ENCODE measurements at regions of chr7 and their contacts with region 1.

Region 1: DNA sequence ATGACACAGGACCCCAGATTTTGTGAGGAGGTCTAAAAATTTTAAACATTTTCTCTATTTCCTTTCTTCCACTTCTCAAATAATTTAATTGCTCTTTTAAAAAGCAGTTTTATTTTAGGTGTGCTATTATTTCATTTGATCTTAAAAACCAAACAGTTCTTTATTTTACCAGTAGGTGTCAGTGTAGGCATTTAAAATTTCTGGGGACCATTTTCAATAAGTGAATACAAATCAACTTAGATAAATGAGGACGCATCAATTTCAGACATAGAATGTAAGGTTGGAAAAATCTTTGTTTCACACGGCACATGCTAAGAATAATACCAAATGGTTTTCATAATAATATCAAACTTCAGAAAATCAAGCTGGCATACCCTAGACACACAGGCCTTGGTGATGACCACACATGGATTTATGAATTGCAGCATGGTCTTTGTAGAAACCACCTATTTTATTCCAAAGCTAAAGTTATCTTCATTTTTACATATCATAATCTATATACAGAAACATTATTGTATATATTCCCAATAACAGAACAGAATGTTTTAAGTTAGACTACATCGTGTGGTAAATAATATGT is 127.6 kb upstream of the SLC26A5 start:
- DNase-seq: peak; percentile 29 to 48 (median 34)
- ATAC-seq: peak; percentile 46; the same call in 1 of the 3 replicates
- H3K4me3 ChIP-seq: no peak overlapping the region
- H3K27ac ChIP-seq: no peak overlapping the region
- H3K4me1 ChIP-seq: no peaks in the 10 kb centered on the region
- H3K27me3 ChIP-seq: no peaks in the 10 kb centered on the region
- CTCF ChIP-seq: peak in 2 of 3 experiments; percentile 50 to 82; a peak in 3 of 6 replicates
- EP300 ChIP-seq: no peak
- POLR2A ChIP-seq: no peak
- RAD21 ChIP-seq: peak; percentile 90 to 95

Region 2: GRCh38 chr7:103447073-103447951 is 126.3 kb before region 1 on chr7:
- CTCF ChIA-PET with region 1: no interaction called
- POLR2A ChIA-PET with region 1: no interaction called
- in situ Hi-C with region 1: no loop called
- intact Hi-C with region 1: loop called (anchors 2 kb)
- DNase-seq: peak; percentile 78 to 84 (median 80)
- ATAC-seq: peak; percentile 97
- H3K4me3 ChIP-seq: no peak overlapping the region
- H3K27ac ChIP-seq: no peak overlapping the region
- H3K4me1 ChIP-seq: peaks cover 9 to 14% of the 10 kb centered on the region in 2 experiments; a peak in 4 of 5 replicates
- H3K27me3 ChIP-seq: peaks cover 29 to 34% of the 10 kb centered on the region in 2 experiments
- CTCF ChIP-seq: peak; percentile 85 to 94 (median 92)
- EP300 ChIP-seq: no peak
- POLR2A ChIP-seq: no peak
- RAD21 ChIP-seq: peak; percentile 72 to 91

Region 3: GRCh38 chr7:103680161-103681144 is 106.9 kb after region 1 on chr7:
- CTCF ChIA-PET with region 1: no interaction called
- POLR2A ChIA-PET with region 1: no interaction called
- in situ Hi-C with region 1: no loop called
- intact Hi-C with region 1: no loop called
- DNase-seq: peak in 3 of 4 experiments; percentile 20 to 82 (median 61)
- ATAC-seq: peak; percentile 99
- H3K4me3 ChIP-seq: no peak overlapping the region
- H3K27ac ChIP-seq: peak overlapping the region; percentile 51; the same call in 2 of the 3 replicates
- H3K4me1 ChIP-seq: peaks cover 4 to 13% of the 10 kb centered on the region in 2 experiments; a peak in 4 of 5 replicates
- H3K27me3 ChIP-seq: no peaks in the 10 kb centered on the region
- CTCF ChIP-seq: no peak
- EP300 ChIP-seq: no peak
- POLR2A ChIP-seq: no peak
- RAD21 ChIP-seq: no peak

Region 4: GRCh38 chr7:103752997-103753396 is 179.4 kb after region 1 on chr7:
- CTCF ChIA-PET with region 1: interaction called, 29 read pairs
- POLR2A ChIA-PET with region 1: no interaction called
- in situ Hi-C with region 1: no loop called
- intact Hi-C with region 1: loop called (anchors 1 kb)
- DNase-seq: peak in 1 of 4 experiments; percentile 25
- ATAC-seq: peak; percentile 73
- H3K4me3 ChIP-seq: no peak overlapping the region
- H3K27ac ChIP-seq: no peak overlapping the region
- H3K4me1 ChIP-seq: no peaks in the 10 kb centered on the region
- H3K27me3 ChIP-seq: no peaks in the 10 kb centered on the region
- CTCF ChIP-seq: peak in 2 of 3 experiments; percentile 28 to 50; a peak in 4 of 6 replicates
- EP300 ChIP-seq: no peak
- POLR2A ChIP-seq: no peak
- RAD21 ChIP-seq: peak; percentile 40 to 79

Region 5: GRCh38 chr7:103989785-103990767 is 416.5 kb after region 1 on chr7:
- CTCF ChIA-PET with region 1: no interaction called
- POLR2A ChIA-PET with region 1: no interaction called
- in situ Hi-C with region 1: no loop called
- intact Hi-C with region 1: loop called (anchors 10 kb)
- DNase-seq: peak; percentile 71 to 82 (median 74)
- ATAC-seq: peak; percentile 71
- H3K4me3 ChIP-seq: peak overlapping the region; percentile 62
- H3K27ac ChIP-seq: peak overlapping the region; percentile 74
- H3K4me1 ChIP-seq: peaks cover 27 to 36% of the 10 kb centered on the region in 2 experiments
- H3K27me3 ChIP-seq: no peaks in the 10 kb centered on the region
- CTCF ChIP-seq: peak in 2 of 3 experiments; percentile 31 to 69; a peak in 4 of 6 replicates
- EP300 ChIP-seq: no peak
- POLR2A ChIP-seq: peak; percentile 59; the same call in 1 of the 2 replicates
- RAD21 ChIP-seq: peak in 1 of 2 experiments; percentile 24; a peak in 2 of 4 replicates

Region 6: DNA sequence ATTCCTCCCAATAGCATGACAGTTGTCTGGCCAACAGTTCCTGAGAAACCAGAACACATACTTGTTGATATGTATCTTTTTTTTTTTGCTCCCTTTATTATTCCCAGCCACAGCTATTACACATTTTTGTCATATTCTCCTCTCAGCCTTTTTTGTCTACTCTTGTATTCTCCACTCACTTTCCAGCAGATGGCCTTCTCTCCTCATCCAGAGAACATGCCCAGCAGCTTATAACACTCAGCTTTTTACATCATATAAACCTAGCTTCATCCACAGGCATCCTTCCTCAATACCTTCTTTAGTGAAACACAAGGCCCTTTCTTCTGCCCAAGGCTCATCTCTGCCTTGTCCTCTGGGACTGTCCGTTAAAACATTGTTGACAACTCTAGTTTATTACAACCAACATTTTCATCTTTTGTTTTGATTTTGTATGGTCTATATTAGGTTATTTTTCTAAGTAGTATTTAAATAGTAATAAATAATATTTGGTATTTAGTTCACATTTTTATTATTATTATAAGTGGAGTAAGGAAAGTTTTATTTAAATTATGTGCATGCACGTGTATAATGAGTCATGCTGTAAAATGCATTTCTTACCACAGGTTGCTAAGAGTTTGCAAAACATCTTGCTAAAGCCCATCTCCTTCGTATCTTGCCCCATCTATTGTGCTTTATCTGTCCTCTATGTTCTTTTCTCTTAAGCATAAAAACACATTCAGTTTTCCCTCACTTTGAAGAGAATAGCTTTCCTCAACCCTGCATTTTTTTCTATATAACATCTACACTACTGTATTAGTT is 532.7 kb after region 1 on chr7:
- CTCF ChIA-PET with region 1: no interaction called
- POLR2A ChIA-PET with region 1: no interaction called
- in situ Hi-C with region 1: no loop called
- intact Hi-C with region 1: loop called (anchors 10 kb)
- DNase-seq: peak in 1 of 4 experiments; percentile 33
- ATAC-seq: peak; percentile 83
- H3K4me3 ChIP-seq: no peak overlapping the region
- H3K27ac ChIP-seq: no peak overlapping the region
- H3K4me1 ChIP-seq: no peaks in the 10 kb centered on the region; a peak in 1 of 5 replicates
- H3K27me3 ChIP-seq: no peaks in the 10 kb centered on the region
- CTCF ChIP-seq: peak in 2 of 3 experiments; percentile 32 to 51; a peak in 3 of 6 replicates
- EP300 ChIP-seq: no peak
- POLR2A ChIP-seq: no peak
- RAD21 ChIP-seq: peak; percentile 15 to 65; a peak in 3 of 4 replicates

Region 7: DNA sequence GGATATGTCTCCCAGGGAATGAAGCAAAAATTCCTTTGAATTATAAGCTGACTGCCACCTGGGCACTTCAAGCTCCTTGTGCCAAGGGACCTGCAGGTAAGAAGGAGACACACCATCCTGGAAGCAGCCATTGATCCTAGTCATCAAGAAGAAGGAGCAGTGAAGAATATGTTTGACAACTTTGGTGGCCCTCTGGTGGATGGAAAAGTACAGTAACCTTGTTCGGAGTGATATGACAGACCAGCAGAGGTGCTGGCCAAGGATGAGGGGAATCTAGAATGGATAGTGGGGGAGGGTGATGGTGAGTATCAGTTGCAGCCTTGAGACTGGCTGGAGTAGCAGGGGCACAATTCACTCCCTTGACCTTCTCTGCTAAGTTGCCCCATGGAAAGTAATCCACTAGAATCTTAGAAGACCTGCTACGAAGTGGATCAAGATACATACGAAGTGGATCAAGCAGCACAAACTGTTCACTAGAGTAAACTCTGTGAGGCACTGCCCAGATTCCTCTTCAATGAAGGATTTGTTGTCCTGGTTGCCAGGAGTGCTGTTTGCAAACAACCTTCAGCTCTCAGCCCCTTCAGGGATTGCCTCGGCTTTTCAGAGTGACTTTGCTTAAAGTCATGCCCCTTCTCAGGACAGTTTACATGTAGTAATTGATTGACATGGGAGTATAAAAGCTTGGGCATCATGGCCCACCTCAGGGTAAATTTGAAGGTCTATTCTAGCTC is 679.0 kb after region 1 on chr7:
- CTCF ChIA-PET with region 1: no interaction called
- POLR2A ChIA-PET with region 1: no interaction called
- in situ Hi-C with region 1: no loop called
- intact Hi-C with region 1: loop called (anchors 10 kb)
- DNase-seq: peak in 3 of 4 experiments; percentile 14 to 33 (median 19)
- ATAC-seq: peak; percentile 86
- H3K4me3 ChIP-seq: no peak overlapping the region
- H3K27ac ChIP-seq: no peak overlapping the region
- H3K4me1 ChIP-seq: no peaks in the 10 kb centered on the region
- H3K27me3 ChIP-seq: peaks cover 0 to 6% of the 10 kb centered on the region in 2 experiments; a peak in 2 of 5 replicates
- CTCF ChIP-seq: peak; percentile 46 to 54 (median 50); a peak in 5 of 6 replicates
- EP300 ChIP-seq: no peak
- POLR2A ChIP-seq: no peak
- RAD21 ChIP-seq: peak in 1 of 2 experiments; percentile 44; a peak in 2 of 4 replicates

Measured in K562 (cell line).